ENCODE measurements at regions of chr4 and their contacts with region 1.

Region 1: GRCh38 chr4:21469438-21470300 is 478.9 kb downstream of the KCNIP4 start:
- DNase-seq: peak in 2 of 5 donors; percentile 22 to 53
- H3K4me3 ChIP-seq: no peak overlapping the region
- H3K27ac ChIP-seq: no peak overlapping the region
- H3K4me1 ChIP-seq: no peaks in the 10 kb centered on the region
- H3K27me3 ChIP-seq: no peaks in the 10 kb centered on the region
- CTCF ChIP-seq: peak; percentile 40

Region 2: DNA sequence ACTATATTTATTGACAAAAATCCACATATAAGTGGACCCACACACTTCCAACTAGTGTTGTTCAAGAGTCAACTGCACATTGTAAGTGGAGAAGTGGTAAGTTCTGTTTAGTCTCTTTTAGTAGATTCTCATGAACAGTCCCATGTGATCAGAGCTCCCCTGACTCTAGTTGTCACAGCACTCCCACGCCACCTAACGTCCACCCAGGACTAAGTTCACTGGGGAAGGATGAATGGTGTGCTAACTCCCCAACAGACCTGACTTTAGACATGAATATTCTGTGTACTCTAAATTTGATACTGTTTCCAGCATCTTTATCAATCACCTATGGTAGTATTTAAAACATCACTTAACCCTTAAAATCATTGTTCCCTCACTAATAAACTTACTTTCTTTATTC is 709.6 kb before region 1 on chr4:
- intact Hi-C with region 1: loop called (anchors 10 kb)
- DNase-seq: no peak
- H3K4me3 ChIP-seq: no peak overlapping the region
- H3K27ac ChIP-seq: no peak overlapping the region
- H3K4me1 ChIP-seq: no peaks in the 10 kb centered on the region
- H3K27me3 ChIP-seq: no peaks in the 10 kb centered on the region
- CTCF ChIP-seq: no peak

Region 3: DNA sequence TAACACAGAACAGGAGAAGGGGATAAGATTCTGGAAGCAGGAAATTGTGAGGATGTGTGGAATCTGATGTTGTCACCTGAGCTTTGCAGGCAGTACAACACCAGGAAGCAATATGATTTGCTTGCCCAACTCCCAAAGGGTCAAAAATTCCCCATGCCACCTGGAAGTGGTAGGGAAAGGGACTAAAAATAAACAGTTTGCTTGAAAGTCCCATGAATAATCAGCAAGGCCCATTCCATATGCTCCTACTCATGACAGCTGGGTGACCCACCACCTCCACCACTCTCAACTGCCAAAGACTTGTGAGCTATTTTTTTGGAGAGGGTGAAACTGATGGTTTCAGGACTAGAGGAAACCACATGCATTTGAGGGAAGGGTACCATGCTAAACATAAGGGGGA is 310.5 kb after region 1 on chr4:
- intact Hi-C with region 1: no loop called
- DNase-seq: no peak
- H3K4me3 ChIP-seq: no peak overlapping the region
- H3K27ac ChIP-seq: no peak overlapping the region
- H3K4me1 ChIP-seq: no peaks in the 10 kb centered on the region
- H3K27me3 ChIP-seq: no peaks in the 10 kb centered on the region
- CTCF ChIP-seq: no peak